Activated B cell treated with CpG ODN at 0.5 μM for 24 hours (primary cell): ENCODE measurements at regions of chr19 and their contacts with region 1.

Region 1: GRCh38 chr19:4471403-4472173 is 509 bp upstream of the HDGFL2 start:
- DNase-seq: peak; percentile 83
- ATAC-seq: peak; percentile 86
- H3K4me3 Mint-ChIP-seq: no peak overlapping the region
- H3K27ac Mint-ChIP-seq: no peak overlapping the region
- H3K4me1 Mint-ChIP-seq: peaks cover 22% of the 10 kb centered on the region
- H3K27me3 Mint-ChIP-seq: no peaks in the 10 kb centered on the region
- CTCF ChIP-seq: no peak

Region 2: GRCh38 chr19:4342615-4343369 is 128.8 kb before region 1 on chr19:
- CTCF ChIA-PET with region 1: interaction called, 3 read pairs
- POLR2A ChIA-PET with region 1: interaction called, 12 read pairs
- intact Hi-C with region 1: loop called (anchors 1 kb)
- DNase-seq: peak; percentile 75
- ATAC-seq: peak; percentile 85
- H3K4me3 Mint-ChIP-seq: peak overlapping the region; percentile 91
- H3K27ac Mint-ChIP-seq: peak overlapping the region; percentile 82
- H3K4me1 Mint-ChIP-seq: peaks cover 35% of the 10 kb centered on the region
- H3K27me3 Mint-ChIP-seq: no peaks in the 10 kb centered on the region
- CTCF ChIP-seq: no peak

Region 3: GRCh38 chr19:4369888-4370260 is 101.7 kb before region 1 on chr19:
- CTCF ChIA-PET with region 1: no interaction called
- POLR2A ChIA-PET with region 1: interaction called, 5 read pairs
- intact Hi-C with region 1: loop called (anchors 5 kb)
- DNase-seq: peak; percentile 51
- ATAC-seq: peak; percentile 49
- H3K4me3 Mint-ChIP-seq: peak overlapping the region; percentile 78
- H3K27ac Mint-ChIP-seq: peak overlapping the region; percentile 92
- H3K4me1 Mint-ChIP-seq: peaks cover 70% of the 10 kb centered on the region
- H3K27me3 Mint-ChIP-seq: no peaks in the 10 kb centered on the region
- CTCF ChIP-seq: no peak

Region 4: DNA sequence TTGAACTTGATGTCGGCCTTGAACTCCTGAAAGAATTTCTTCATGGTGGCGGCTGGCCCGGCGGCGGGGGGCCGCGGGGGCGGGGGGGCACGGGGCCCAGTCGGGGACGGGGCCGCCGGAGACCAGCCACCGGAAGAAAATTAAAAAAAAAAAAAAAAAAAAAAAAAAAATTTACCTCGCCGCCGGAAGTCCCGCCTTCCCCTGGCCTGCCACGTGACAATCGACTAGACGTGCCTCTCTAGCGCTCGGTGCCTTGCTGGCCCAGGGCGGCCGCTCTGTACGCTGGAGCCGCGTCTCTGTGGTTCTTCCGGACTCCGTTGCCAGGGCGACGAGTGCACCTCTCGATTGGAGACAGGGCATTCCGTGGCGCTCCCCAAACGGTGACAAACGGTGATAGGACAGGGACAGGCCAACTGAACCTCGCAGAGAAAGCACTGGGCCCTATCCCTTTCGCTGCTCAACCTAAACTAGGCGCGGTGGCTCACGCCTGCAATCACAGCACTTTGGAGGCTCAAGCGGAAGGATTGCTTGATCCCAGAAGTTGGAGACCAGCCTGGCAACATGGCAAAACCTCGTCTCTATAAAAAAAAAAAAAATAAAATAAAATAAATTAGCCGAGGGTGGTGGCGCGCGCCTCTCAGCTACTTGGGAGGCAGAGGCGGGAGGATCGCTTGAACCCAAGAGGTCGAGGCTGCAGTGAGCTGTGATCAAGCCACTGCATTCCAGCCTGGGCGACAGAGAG is 13.8 kb before region 1 on chr19 and contains the start of gene UBXN6:
- CTCF ChIA-PET with region 1: interaction called, 4 read pairs
- POLR2A ChIA-PET with region 1: interaction called, 26 read pairs
- intact Hi-C with region 1: loop called (anchors 1 kb)
- DNase-seq: peak; percentile 95
- ATAC-seq: peak; percentile 95
- H3K4me3 Mint-ChIP-seq: peak within 1 kb of the TSS; percentile 89
- H3K27ac Mint-ChIP-seq: peak within 1 kb of the TSS; percentile 86
- H3K4me1 Mint-ChIP-seq: peaks cover 20% of the 10 kb centered on the region
- H3K27me3 Mint-ChIP-seq: no peaks in the 10 kb centered on the region
- CTCF ChIP-seq: no peak
- total RNA-seq, gene UBXN6: 54.3 and 58.2 TPM in 2 replicates

Region 5: DNA sequence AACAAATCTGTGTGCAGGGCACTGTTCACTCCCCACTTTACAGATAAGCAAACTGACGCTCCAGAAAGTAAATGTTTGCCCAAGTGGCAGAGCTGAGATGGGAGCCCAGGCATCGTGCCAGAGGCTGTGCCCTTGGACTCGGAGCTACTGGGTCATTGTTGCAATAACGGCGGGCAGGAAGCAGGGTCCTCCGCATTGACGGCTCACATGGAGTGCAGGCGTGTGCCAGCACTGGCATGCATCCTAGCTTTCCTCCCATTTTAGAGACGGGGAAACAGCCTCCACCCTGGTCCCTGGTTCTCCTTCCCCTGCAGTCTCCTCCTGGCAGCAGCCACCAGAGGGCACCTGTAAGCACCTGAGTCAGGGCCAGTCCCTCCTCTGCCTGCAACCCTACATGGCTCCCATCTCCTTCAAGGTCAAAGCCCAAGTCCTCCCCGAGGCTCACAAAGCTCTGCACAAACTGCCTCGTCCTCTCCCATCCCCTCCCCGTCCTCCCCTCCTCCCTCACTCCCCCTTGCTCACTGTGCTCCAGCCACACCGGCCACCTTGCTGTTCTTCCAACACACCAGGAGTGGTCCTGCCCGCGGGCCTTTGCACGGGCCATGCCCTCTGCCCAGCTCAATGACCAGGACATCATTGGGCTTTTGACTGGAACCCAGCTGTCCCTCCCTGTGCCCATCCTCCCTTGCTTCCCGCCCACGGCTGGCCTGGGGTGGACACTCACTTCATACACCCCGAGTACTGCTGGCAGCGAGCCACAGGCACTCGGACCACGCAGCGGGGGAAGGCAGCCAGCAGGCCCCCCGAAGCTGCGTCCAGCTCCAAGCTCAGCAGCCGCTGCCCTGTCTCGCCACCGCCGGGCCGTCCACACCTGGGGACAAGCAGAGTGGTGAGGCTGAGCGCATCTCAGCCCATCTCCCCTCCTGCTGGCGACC is 76.0 kb after region 1 on chr19:
- CTCF ChIA-PET with region 1: no interaction called
- POLR2A ChIA-PET with region 1: no interaction called
- intact Hi-C with region 1: no loop called
- DNase-seq: no peak
- ATAC-seq: peak; percentile 31
- H3K4me3 Mint-ChIP-seq: no peak overlapping the region
- H3K27ac Mint-ChIP-seq: no peak overlapping the region
- H3K4me1 Mint-ChIP-seq: no peaks in the 10 kb centered on the region
- H3K27me3 Mint-ChIP-seq: peaks cover 2% of the 10 kb centered on the region
- CTCF ChIP-seq: no peak